ENCODE measurements at regions of chr1 and their contacts with region 1.

Region 1: GRCh38 chr1:168719306-168720111 is 9.5 kb downstream of the DPT start:
- DNase-seq: peak; percentile 99
- H3K4me3 ChIP-seq: no peak overlapping the region
- H3K27ac ChIP-seq: peak overlapping the region; percentile 53
- H3K4me1 ChIP-seq: peaks cover 23% of the 10 kb centered on the region
- H3K27me3 ChIP-seq: no peaks in the 10 kb centered on the region
- CTCF ChIP-seq: no peak

Region 2: DNA sequence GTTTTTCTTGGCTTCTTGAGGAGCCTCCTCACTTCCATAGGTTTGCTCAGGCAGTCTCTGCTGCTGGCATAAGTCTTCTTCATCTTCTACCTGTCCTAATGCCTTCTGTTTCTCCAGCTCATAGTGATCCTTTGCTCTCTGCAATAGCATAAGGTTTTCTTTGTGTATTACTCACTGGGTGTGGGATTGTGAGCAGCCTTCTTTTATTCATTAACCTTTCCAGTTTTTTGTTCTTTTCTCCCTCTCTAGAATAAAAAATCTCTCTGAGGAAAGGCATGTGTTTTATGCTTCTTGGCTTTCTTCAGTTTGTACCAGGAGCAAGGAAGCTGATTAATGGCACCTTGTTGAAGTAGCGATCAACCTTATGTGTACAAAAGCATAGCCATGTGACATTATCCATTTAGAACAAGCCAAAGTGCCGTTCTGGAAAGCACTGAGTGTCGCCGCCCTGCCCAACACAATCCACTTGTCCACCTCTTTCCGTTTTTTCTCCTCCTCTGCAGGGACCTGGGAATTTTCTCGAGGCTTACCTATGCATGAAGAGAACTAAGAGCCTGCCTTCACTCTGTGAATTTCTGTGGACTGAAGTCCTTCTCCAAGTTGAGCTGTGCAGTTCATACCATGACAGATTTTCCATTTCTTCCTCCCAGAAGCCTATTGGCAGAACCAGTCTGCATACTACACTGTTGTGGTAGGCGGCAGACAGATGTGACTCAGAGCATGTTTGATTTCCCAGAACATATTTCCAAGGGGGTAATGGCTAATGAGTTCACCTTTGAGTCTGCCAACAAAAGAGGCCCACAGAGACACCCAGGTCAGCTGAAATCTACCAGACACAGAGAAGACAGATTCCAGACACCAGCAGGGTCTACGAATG is 29.5 kb before region 1 on chr1:
- CTCF ChIA-PET with region 1: no interaction called
- dilution Hi-C with region 1: no loop called
- in situ Hi-C with region 1: no loop called
- intact Hi-C with region 1: no loop called
- DNase-seq: peak; percentile 67
- H3K4me3 ChIP-seq: no peak overlapping the region
- H3K27ac ChIP-seq: no peak overlapping the region
- H3K4me1 ChIP-seq: peaks cover 10% of the 10 kb centered on the region
- H3K27me3 ChIP-seq: no peaks in the 10 kb centered on the region
- CTCF ChIP-seq: no peak

Region 3: GRCh38 chr1:168763031-168763430 is 43.5 kb after region 1 on chr1:
- CTCF ChIA-PET with region 1: no interaction called
- dilution Hi-C with region 1: no loop called
- in situ Hi-C with region 1: no loop called
- intact Hi-C with region 1: loop called (anchors 5 kb)
- DNase-seq: peak; percentile 84
- H3K4me3 ChIP-seq: no peak overlapping the region
- H3K27ac ChIP-seq: no peak overlapping the region
- H3K4me1 ChIP-seq: peaks cover 17% of the 10 kb centered on the region
- H3K27me3 ChIP-seq: no peaks in the 10 kb centered on the region
- CTCF ChIP-seq: no peak